ENCODE measurements at regions of chr12 and their contacts with region 1.

Region 1: GRCh38 chr12:5982106-5982505 is 37.0 kb upstream of the ANO2 start:
- DNase-seq: no peak
- ATAC-seq: no peak

Region 2: DNA sequence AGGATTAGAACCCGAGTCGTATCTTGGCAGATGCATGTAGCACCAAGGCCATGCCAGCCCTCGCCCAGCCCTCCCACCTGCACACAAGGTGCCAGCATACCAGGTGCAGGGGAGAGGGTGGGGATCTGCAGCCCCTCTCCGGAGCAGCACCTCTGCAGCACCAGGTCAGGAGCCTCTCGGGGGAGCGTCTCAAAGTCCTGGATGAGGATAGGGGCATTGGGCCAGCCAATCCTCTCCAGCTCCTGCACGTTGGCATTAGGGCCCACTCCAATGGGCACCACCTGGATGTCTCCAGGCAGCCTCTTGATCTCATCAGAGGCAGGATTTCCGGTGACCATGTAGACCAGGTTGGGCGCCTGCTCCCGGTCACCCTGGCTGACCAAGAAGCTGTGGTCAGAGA is 36.2 kb after region 1 on chr12:
- intact Hi-C with region 1: loop called (anchors 2 kb)
- DNase-seq: no peak
- ATAC-seq: no peak

Measured in sciatic nerve (tissue), 2 donors.